HepG2 (cell line): ENCODE measurements at regions of chr10 and their contacts with region 1.

Region 1: GRCh38 chr10:99620713-99621453 is 644 bp upstream of the SLC25A28 start:
- DNase-seq: peak; percentile 83
- ATAC-seq: peak; percentile 93
- H3K4me3 ChIP-seq: peak overlapping the region; percentile 72 to 79 (median 79)
- H3K27ac ChIP-seq: peak overlapping the region; percentile 95
- H3K4me1 ChIP-seq: peaks cover 41% of the 10 kb centered on the region
- H3K27me3 ChIP-seq: no peaks in the 10 kb centered on the region; a peak in 1 of 5 replicates
- CTCF ChIP-seq: no peak
- EP300 ChIP-seq: peak; percentile 3 to 20; a peak in 1 of 4 replicates
- POLR2A ChIP-seq: peak; percentile 70 to 80
- RAD21 ChIP-seq: 0 out of 2 replicates have a peak, but pooled peaks have one; percentile 11

Region 2: DNA sequence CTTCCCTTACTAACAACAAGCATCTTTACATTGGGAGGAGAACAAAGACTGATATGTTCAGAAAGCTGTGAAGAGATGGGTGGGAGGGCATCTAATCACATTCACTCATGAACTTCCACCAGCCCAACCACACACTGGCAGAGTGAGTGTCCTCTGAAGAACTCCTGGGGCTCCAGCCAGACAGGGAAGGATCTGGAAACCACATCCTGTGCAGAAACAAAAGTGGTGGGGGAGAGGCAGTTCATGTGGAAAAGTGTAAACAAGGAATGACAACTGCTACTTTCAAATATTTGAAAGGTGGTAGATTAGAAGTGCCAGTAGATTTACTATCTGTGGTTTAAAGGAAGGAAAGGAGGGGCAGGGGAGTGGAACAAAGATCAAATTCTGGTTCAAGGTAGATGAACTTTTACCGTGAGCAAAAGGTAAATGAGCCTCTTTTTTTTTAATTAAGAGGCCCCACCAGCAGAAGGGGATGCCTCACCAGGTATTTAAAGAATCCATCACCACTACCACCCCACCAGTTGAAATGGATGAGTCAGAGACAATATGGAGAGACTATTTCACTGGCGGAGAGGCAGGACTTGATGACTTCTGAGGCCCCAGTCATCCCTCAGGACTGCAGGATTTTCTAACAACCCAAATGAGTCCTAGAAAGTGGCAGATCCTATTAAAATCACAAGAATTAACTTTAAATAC is 225.0 kb before region 1 on chr10:
- CTCF ChIA-PET with region 1: no interaction called
- POLR2A ChIA-PET with region 1: no interaction called
- in situ Hi-C with region 1: no loop called
- intact Hi-C with region 1: loop called (anchors 1 kb)
- DNase-seq: peak; percentile 89
- ATAC-seq: peak; percentile 80
- H3K4me3 ChIP-seq: no peak overlapping the region
- H3K27ac ChIP-seq: peak overlapping the region; percentile 76
- H3K4me1 ChIP-seq: peaks cover 58% of the 10 kb centered on the region
- H3K27me3 ChIP-seq: no peaks in the 10 kb centered on the region
- CTCF ChIP-seq: 0 out of 2 replicates have a peak, but pooled peaks have one; percentile 9
- EP300 ChIP-seq: peak; percentile 52 to 92; a peak in 3 of 4 replicates
- POLR2A ChIP-seq: no peak
- RAD21 ChIP-seq: no peak

Region 3: GRCh38 chr10:99497343-99498025 is 123.4 kb before region 1 on chr10:
- CTCF ChIA-PET with region 1: no interaction called
- POLR2A ChIA-PET with region 1: no interaction called
- in situ Hi-C with region 1: no loop called
- intact Hi-C with region 1: no loop called
- DNase-seq: no peak
- ATAC-seq: no peak
- H3K4me3 ChIP-seq: no peak overlapping the region
- H3K27ac ChIP-seq: no peak overlapping the region
- H3K4me1 ChIP-seq: no peaks in the 10 kb centered on the region
- H3K27me3 ChIP-seq: peaks cover 0 to 1% of the 10 kb centered on the region in 2 experiments; a peak in 3 of 5 replicates
- CTCF ChIP-seq: no peak
- EP300 ChIP-seq: no peak
- POLR2A ChIP-seq: no peak
- RAD21 ChIP-seq: no peak

Region 4: GRCh38 chr10:99648717-99649116 is 27.8 kb after region 1 on chr10:
- CTCF ChIA-PET with region 1: no interaction called
- POLR2A ChIA-PET with region 1: interaction called, 11 read pairs
- in situ Hi-C with region 1: no loop called
- intact Hi-C with region 1: no loop called
- DNase-seq: no peak
- ATAC-seq: no peak
- H3K4me3 ChIP-seq: no peak overlapping the region
- H3K27ac ChIP-seq: no peak overlapping the region
- H3K4me1 ChIP-seq: peaks cover 31% of the 10 kb centered on the region
- H3K27me3 ChIP-seq: no peaks in the 10 kb centered on the region
- CTCF ChIP-seq: no peak
- EP300 ChIP-seq: no peak
- POLR2A ChIP-seq: no peak
- RAD21 ChIP-seq: no peak

Region 5: DNA sequence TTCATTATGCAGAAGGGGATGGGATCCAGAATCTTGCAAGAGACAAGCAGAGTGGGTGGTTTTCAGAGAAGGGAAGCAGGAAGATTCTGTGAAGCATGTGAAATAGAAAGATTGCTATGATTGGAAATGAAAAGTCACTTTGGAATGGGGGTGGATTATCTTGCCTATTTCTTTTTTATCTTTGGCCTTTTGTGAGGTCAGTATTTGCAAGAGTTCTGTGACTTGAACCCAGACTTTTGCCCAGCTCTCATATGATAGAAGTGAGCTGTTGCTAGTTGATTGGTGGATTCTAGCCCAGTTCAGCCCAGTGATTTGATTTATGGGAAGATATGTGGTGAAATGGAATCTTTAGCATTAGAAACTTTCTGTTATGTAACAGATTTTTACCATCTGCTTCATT is 55.5 kb after region 1 on chr10:
- CTCF ChIA-PET with region 1: no interaction called
- POLR2A ChIA-PET with region 1: interaction called, 13 read pairs
- in situ Hi-C with region 1: loop called (anchors 10 kb)
- intact Hi-C with region 1: no loop called
- DNase-seq: no peak
- ATAC-seq: no peak
- H3K4me3 ChIP-seq: no peak overlapping the region
- H3K27ac ChIP-seq: no peak overlapping the region
- H3K4me1 ChIP-seq: peaks cover 28% of the 10 kb centered on the region
- H3K27me3 ChIP-seq: no peaks in the 10 kb centered on the region
- CTCF ChIP-seq: no peak
- EP300 ChIP-seq: no peak
- POLR2A ChIP-seq: no peak
- RAD21 ChIP-seq: no peak

Region 6: DNA sequence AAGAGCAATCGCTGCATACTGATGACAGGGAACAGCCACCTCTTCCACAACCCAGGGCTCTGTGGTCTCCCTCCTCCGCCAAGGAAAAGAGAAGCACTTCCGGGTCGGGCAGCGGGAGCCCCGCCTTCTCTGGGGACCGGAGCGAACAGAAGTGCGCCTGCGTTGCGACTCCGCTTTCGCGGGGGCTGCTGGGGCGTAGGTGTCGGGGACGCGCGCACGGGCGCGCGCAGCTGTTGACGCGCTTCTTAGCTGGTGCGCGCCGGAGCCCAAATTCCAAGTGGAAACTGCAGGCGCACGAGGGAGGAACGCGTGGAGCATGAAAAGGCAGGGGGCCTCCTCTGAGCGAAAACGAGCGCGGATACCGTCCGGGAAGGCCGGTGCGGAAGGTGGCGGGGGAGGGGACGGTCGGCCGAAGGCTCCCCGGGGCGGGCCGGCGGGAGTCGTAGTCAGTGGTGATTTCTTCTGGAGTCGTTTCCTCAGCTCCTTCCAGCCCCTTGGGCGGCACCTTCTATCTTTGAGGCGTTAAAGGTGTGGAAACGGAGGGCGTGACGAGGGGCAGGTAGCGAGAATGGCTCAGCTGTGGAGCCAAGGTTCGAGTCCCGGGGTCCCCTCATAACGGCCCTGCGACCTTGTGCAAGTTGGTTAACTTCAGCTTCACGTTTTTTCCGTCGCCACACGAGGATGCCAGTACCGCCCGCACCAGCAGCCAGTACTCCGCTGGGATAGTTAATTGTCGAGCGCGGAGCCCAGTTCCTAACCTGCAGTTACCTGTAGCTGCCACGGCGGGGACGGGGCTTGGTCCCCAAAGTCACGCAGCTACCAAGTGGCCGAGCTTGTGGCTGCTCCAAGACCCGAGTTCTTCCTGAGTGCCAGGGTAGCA is 111.4 kb after region 1 on chr10 and contains the starts of genes COX15 and CUTC:
- CTCF ChIA-PET with region 1: no interaction called
- POLR2A ChIA-PET with region 1: interaction called, 22 read pairs
- in situ Hi-C with region 1: no loop called
- intact Hi-C with region 1: no loop called
- DNase-seq: peak; percentile 94
- ATAC-seq: peak; percentile 93
- H3K4me3 ChIP-seq: peak within 1 kb of the TSS; percentile 80 to 87 (median 81)
- H3K27ac ChIP-seq: peak within 1 kb of the TSS; percentile 97
- H3K4me1 ChIP-seq: peaks cover 39% of the 10 kb centered on the region
- H3K27me3 ChIP-seq: no peaks in the 10 kb centered on the region; a peak in 1 of 5 replicates
- CTCF ChIP-seq: peak; percentile 75
- EP300 ChIP-seq: no peak
- POLR2A ChIP-seq: peak; percentile 85 to 88
- RAD21 ChIP-seq: peak; percentile 79
- total RNA-seq, gene COX15: 44.7 and 59.4 TPM in 2 replicates
- total RNA-seq, gene CUTC: 25.8 and 36.5 TPM in 2 replicates

Region 7: DNA sequence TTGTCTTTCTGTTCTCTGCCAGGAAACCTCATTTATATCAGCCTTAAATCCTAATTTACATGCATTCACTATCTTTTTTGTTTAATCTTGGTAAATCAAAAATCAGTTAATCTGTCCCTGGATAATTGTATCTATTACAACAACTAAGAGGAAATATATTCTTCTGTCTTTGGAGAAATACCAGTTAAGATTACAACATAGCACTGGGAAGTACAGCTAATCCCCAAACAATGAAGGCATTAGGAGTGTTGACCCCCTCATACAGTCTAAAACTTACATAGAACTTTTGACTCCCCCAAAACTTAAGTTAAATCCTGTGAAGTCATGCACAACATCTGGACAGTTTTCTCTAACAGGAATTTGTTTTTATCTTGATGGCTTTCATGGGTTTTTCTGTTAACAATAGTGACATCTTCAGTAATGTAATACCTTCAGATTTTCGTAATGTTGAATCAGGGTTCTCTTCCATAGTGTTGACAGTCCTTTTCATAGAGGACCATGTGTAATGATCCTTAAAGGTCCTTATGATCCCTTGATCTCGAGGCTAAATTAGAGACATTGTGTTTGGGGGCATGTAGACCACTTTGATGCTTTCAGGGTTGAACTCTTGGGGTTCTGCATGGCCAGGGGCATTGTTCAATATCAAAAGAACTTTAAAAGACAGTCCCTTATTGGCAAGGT is 137.5 kb after region 1 on chr10:
- CTCF ChIA-PET with region 1: no interaction called
- POLR2A ChIA-PET with region 1: no interaction called
- in situ Hi-C with region 1: no loop called
- intact Hi-C with region 1: no loop called
- DNase-seq: no peak
- ATAC-seq: no peak
- H3K4me3 ChIP-seq: no peak overlapping the region
- H3K27ac ChIP-seq: no peak overlapping the region
- H3K4me1 ChIP-seq: peaks cover 60% of the 10 kb centered on the region
- H3K27me3 ChIP-seq: no peaks in the 10 kb centered on the region
- CTCF ChIP-seq: no peak
- EP300 ChIP-seq: no peak
- POLR2A ChIP-seq: no peak
- RAD21 ChIP-seq: no peak